ENCODE measurements at regions of chr11 and their contacts with region 1.

Region 1: DNA sequence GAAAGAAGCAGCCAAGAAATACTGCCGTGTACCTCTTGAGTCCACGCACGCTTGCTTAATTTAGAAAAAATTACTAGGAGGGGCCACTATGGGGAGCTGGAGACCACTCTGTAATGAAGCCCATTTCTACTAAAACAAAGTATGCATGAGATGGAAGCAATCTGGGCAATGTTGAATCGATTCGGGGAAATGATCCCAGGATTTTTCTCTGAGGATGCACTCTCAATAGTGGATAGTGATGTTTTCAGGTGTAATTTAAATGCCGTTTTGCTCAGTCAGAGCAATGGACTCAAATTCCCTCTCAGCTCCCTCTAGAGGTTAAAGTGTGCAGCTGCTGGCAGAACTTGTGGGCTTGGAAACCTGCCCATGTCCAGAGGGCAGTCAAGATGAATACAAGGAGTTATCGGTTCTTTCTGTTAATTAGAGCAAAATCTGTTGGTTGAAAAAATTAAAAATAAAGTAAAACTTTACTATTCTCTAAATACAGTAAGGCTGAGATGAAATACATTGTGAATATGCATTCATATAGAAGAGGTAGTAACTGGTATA is 64.1 kb downstream of the ME3 start:
- DNase-seq: peak; percentile 88
- H3K4me3 ChIP-seq: peak overlapping the region in 1 of 4 donors; percentile 15
- H3K27ac ChIP-seq: peak overlapping the region; percentile 35 to 75 (median 60)
- H3K4me1 ChIP-seq: peaks cover 0 to 58% (median 38%) of the 10 kb centered on the region in 4 donors
- H3K27me3 ChIP-seq: no peaks in the 10 kb centered on the region
- CTCF ChIP-seq: peak; percentile 88 to 94 (median 91)
- EP300 ChIP-seq: no peak
- POLR2A ChIP-seq: no peak

Region 2: DNA sequence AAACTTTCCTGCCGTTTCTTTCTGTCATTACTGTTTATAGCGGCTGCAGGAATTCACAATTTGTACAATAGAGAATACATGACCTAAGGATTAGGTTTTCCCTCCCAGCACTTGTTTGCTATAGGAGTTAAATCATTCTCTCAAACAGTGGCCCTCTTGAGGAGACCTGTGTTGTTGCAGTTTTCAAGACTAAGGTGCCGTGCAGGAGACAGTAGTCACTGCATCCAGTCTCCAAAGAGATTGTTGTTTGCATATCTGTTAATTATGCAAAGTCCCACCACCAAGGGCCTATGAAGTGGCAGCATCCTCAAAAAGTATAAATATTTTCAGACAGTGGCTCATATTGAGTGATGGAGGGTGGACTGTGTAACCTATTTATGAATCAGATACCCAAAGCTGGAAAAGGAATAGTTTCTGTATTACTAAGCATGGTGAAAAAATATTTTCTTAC is 194.3 kb after region 1 on chr11:
- intact Hi-C with region 1: loop called (anchors 2 kb)
- DNase-seq: no peak
- H3K4me3 ChIP-seq: peak overlapping the region; percentile 69 to 91 (median 81)
- H3K27ac ChIP-seq: peak overlapping the region in 3 of 4 donors; percentile 88 to 94 (median 92)
- H3K4me1 ChIP-seq: peaks cover 0 to 71% (median 62%) of the 10 kb centered on the region in 4 donors
- H3K27me3 ChIP-seq: no peaks in the 10 kb centered on the region
- CTCF ChIP-seq: peak; percentile 17 to 76 (median 56)
- EP300 ChIP-seq: no peak
- POLR2A ChIP-seq: no peak

Region 3: DNA sequence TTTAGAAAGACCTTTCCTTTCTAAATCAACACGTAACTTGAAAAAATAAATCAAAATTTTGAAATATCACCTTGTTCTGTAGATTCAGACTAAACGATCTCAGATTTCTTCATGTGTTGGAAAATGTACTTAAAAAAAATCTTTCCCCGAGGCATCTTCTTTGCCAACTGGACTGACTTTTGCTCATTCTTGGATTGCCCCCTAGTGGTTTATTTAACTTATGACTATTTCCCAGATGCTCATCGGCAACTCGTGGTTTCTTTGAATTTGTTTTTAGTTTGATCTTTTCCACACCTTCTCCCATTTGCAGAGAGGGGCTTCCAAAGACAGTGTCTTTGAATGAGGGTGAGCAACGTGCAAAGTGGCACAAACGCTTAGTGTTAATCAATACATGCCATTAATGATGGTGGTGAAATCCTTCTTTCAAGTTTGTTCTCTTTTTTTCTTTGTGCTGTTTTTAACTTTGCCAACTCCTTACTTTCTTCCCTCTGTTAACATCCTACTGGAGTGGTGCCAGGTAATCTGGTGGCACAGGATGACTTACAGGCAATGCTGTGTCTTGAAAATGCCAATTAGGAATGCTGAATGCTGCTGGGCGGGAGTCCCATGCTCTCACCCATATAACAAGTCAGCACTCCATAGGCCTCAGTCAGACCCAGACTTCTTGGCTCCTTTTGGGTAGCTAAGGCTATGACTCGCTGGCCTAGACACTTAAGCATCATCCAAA is 210.3 kb after region 1 on chr11:
- intact Hi-C with region 1: loop called (anchors 2 kb)
- DNase-seq: no peak
- H3K4me3 ChIP-seq: no peak overlapping the region
- H3K27ac ChIP-seq: peak overlapping the region in 3 of 4 donors; percentile 80 to 92 (median 87)
- H3K4me1 ChIP-seq: peaks cover 0 to 58% (median 55%) of the 10 kb centered on the region in 4 donors
- H3K27me3 ChIP-seq: no peaks in the 10 kb centered on the region
- CTCF ChIP-seq: peak; percentile 64 to 82 (median 72)
- EP300 ChIP-seq: peak in 1 of 4 donors; percentile 8
- POLR2A ChIP-seq: no peak